ENCODE measurements at regions of chr5 and their contacts with region 1.

Region 1: GRCh38 chr5:167723254-167723871 is 568.1 kb upstream of the WWC1 start:
- H3K4me3 Mint-ChIP-seq: no peak overlapping the region
- H3K27ac Mint-ChIP-seq: no peak overlapping the region
- H3K4me1 Mint-ChIP-seq: peaks cover 8% of the 10 kb centered on the region
- H3K27me3 Mint-ChIP-seq: peaks cover 1% of the 10 kb centered on the region

Region 2: GRCh38 chr5:167688341-167689130 is 34.8 kb before region 1 on chr5:
- intact Hi-C with region 1: no loop called
- H3K4me3 Mint-ChIP-seq: no peak overlapping the region
- H3K27ac Mint-ChIP-seq: no peak overlapping the region
- H3K4me1 Mint-ChIP-seq: no peaks in the 10 kb centered on the region
- H3K27me3 Mint-ChIP-seq: no peaks in the 10 kb centered on the region

Region 3: GRCh38 chr5:167802778-167803315 is 79.5 kb after region 1 on chr5:
- intact Hi-C with region 1: loop called (anchors 5 kb)
- H3K4me3 Mint-ChIP-seq: no peak overlapping the region
- H3K27ac Mint-ChIP-seq: no peak overlapping the region
- H3K4me1 Mint-ChIP-seq: peaks cover 9% of the 10 kb centered on the region
- H3K27me3 Mint-ChIP-seq: peaks cover 2% of the 10 kb centered on the region

Region 4: DNA sequence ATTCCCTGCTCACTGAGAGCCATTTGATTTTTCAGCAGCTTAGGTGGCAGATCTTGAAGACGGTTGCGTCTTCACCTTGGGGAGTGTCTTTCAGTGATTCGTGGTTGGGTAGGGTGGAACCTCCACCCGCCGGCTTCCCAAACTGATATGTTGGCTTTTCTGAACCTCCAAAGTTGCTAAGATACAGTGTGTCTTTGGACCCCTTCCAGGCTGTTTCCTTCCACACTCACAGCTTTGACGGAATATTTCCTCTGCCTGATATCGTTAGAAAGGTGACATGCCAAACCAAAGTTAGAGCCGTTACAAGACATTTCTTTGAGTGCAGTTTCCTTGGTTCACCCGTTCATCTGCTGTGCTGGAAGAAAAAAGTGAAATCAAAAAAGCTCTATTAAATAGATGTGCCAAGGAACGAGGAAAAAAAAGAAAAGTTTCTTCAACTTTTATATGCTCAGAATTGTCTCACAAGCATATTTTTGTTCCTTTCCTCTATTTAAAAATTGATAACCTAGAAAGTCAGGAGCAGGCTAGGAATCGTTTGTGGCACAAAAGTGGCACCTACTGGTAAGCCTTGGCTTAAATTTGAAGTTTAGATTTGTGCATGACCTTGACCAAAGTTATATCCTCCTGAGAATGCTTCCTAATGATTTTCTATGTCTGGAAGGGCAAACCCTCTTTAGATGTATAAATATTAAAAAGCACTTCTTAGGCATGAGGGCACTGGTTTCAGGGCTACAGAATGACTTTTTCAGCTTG is 297.4 kb after region 1 on chr5:
- intact Hi-C with region 1: loop called (anchors 1 kb)
- H3K4me3 Mint-ChIP-seq: no peak overlapping the region
- H3K27ac Mint-ChIP-seq: no peak overlapping the region
- H3K4me1 Mint-ChIP-seq: no peaks in the 10 kb centered on the region
- H3K27me3 Mint-ChIP-seq: peaks cover 10% of the 10 kb centered on the region

Region 5: DNA sequence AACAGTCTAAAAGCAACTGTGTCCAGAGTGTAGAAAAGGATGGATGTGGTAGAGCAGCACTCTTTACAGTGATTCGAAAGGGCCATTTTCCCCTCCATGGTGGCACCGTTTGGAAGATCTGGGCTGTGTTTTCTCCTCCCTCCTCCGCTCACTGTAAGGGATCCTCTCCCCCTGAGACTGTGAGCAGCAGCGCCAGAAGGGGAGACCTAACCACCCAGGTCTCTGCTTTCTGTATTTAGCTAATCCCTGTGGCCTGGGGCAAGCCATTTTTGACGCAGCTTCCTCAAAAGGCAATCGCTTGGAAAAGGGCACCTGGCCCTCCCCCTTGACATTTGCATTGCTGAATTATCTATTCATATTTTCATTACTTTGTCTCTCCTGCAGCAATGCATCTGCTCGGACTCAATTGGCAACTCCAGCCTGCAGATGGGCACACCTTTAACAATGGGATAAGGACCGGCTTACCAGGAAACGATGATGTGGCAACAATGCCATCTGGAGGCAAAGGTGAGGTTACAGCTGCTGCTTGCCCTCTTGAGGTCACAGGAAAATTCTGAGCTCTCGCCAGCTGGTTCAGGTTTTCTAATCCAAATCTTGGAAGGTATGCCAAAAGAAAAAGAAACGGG is 323.8 kb after region 1 on chr5:
- intact Hi-C with region 1: loop called (anchors 1 kb)
- H3K4me3 Mint-ChIP-seq: no peak overlapping the region
- H3K27ac Mint-ChIP-seq: no peak overlapping the region
- H3K4me1 Mint-ChIP-seq: no peaks in the 10 kb centered on the region
- H3K27me3 Mint-ChIP-seq: peaks cover 3% of the 10 kb centered on the region

Region 6: DNA sequence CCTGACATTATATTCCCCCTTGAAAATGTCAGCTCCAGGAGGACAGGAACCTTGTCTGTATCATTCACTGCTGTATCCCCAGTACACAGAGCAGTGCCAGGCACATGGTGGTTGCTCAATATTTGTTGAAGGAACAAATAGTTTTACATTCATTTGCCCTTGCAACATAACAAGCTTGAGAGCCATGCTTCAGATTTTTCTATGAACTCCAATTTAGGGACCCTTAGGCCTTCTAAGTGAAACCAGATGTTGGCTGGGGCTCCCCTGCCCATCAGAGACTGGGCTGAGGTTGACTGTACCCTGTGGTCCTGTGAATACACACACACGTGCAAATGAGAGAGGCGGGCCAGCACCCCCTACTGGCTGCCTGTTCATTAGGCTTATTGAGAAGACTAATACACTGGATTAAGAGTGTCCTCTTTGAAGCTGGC is 353.2 kb after region 1 on chr5:
- intact Hi-C with region 1: loop called (anchors 1 kb)
- H3K4me3 Mint-ChIP-seq: no peak overlapping the region
- H3K27ac Mint-ChIP-seq: no peak overlapping the region
- H3K4me1 Mint-ChIP-seq: no peaks in the 10 kb centered on the region
- H3K27me3 Mint-ChIP-seq: peaks cover 3% of the 10 kb centered on the region

Region 7: DNA sequence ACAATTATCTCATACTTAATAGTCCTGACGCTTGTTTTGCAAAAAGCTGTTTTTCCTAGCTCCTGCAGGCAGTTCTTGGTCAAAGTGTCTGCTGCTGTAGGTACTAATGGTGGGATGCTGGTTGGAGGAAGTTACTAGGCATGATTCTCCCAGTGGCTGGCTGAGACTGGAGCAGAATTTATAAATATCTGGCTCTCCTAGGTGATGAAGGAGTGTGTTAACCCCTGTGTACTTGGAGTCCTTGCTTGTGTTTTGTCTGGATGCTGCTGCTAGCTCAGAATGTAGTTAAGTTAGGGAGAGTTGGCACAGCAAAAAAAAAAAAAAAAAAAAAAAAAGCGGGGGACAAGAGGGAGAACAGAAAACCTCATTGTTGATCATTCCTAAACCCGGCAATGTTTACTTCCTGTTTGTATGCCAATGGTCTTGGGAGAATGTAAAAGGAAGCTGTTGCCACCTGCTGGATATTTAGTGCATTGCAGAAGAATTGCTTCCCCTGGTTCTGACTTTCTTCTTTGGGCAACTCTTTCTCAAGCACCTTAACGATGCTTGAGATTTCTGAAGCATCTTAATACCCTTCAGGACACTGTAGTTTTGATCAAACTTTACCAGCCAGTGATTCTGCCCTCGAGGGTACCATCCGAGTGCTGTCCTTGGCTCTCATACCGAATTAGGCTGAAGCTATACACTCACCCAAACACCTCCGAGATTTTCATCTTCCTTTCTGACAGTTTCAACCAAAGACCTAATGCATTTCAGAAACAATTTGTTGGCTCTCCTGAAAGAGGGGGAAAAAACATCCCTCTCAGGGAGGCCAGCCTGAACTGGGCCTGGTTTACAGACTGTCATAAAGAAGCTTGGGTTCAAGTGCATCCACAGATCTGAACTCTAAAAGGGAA is 496.4 kb after region 1 on chr5:
- intact Hi-C with region 1: loop called (anchors 1 kb)
- H3K4me3 Mint-ChIP-seq: no peak overlapping the region
- H3K27ac Mint-ChIP-seq: no peak overlapping the region
- H3K4me1 Mint-ChIP-seq: peaks cover 5% of the 10 kb centered on the region
- H3K27me3 Mint-ChIP-seq: peaks cover 6% of the 10 kb centered on the region